Gastrocnemius medialis (tissue), 4 donors: ENCODE measurements at regions of chr18 and their contacts with region 1.

Region 1: DNA sequence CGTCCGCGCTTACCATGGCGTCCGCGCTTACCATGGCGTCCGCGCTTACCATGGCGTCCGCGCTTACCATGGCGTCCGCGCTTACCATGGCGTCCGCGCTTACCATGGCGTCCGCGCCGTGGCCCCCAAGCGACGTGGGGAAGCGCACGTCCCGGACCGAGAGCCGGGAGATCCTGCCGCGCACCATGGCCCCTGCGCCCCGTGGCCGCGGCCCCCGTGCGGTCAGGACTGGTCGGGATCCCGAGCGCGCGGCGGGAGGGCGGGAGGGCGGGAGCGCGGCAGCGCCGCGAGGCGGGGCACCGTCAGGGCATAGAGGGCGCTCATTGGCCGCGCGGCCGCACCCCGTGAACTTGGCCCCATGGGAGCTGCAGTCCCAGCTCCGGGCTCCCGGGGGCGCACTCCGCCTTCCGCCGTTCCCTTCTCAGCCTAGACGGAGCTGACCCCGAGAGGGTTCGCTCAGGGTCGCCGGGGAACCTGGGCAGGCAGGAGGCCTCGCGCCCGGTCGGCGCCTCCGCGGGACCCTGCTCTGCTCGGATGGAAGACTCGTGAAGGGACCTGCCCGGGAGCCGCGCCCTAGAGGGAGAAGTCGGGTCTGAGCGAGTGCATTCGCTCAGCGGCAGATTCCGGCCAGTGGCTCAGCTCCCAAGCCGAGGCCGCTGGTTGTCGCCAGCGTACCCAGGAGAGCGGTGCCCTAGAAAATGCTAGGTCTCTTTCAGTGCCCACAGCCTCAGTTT is at the start of gene ENOSF1:
- DNase-seq: peak; percentile 56 to 69
- ATAC-seq: peak; percentile 77
- H3K4me3 ChIP-seq: peak within 1 kb of the TSS; percentile 69 to 82 (median 76)
- H3K27ac ChIP-seq: peak within 1 kb of the TSS; percentile 69 to 82 (median 76)
- H3K4me1 ChIP-seq: peaks cover 0 to 6% of the 10 kb centered on the region in 2 donors
- H3K27me3 ChIP-seq: no peaks in the 10 kb centered on the region
- CTCF ChIP-seq: peak; percentile 14 to 85 (median 65)
- POLR2A ChIP-seq: peak; percentile 40 to 49
- total RNA-seq, gene ENOSF1: 6.0 to 16.1 (median 10.3) TPM

Region 2: GRCh38 chr18:513826-514560 is 198.6 kb before region 1 on chr18:
- in situ Hi-C with region 1: no loop called
- intact Hi-C with region 1: no loop called
- DNase-seq: peak in 1 of 2 donors; percentile 16
- ATAC-seq: no peak
- H3K4me3 ChIP-seq: no peak overlapping the region
- H3K27ac ChIP-seq: no peak overlapping the region
- H3K4me1 ChIP-seq: no peaks in the 10 kb centered on the region
- H3K27me3 ChIP-seq: no peaks in the 10 kb centered on the region
- CTCF ChIP-seq: no peak
- POLR2A ChIP-seq: no peak

Region 3: GRCh38 chr18:812376-813171 is 100.0 kb after region 1 on chr18:
- in situ Hi-C with region 1: no loop called
- intact Hi-C with region 1: loop called (anchors 5 kb)
- DNase-seq: peak; percentile 62 to 77
- ATAC-seq: peak; percentile 69 to 76
- H3K4me3 ChIP-seq: peak overlapping the region; percentile 75 to 96 (median 86)
- H3K27ac ChIP-seq: peak overlapping the region; percentile 93 to 96 (median 94)
- H3K4me1 ChIP-seq: peaks cover 32 to 40% of the 10 kb centered on the region in 2 donors
- H3K27me3 ChIP-seq: no peaks in the 10 kb centered on the region
- CTCF ChIP-seq: no peak
- POLR2A ChIP-seq: peak; percentile 59 to 75